PC-3 (cell line): ENCODE measurements at regions of chr17 and their contacts with region 1.

Region 1: GRCh38 chr17:72556944-72557826 is 436.4 kb downstream of the SOX9 start:
- DNase-seq: peak; percentile 89
- ATAC-seq: peak; percentile 48
- H3K4me3 ChIP-seq: no peak overlapping the region
- H3K27ac ChIP-seq: no peak overlapping the region
- H3K4me1 ChIP-seq: peaks cover 20% of the 10 kb centered on the region
- H3K27me3 ChIP-seq: no peaks in the 10 kb centered on the region
- CTCF ChIP-seq: peak; percentile 98

Region 2: DNA sequence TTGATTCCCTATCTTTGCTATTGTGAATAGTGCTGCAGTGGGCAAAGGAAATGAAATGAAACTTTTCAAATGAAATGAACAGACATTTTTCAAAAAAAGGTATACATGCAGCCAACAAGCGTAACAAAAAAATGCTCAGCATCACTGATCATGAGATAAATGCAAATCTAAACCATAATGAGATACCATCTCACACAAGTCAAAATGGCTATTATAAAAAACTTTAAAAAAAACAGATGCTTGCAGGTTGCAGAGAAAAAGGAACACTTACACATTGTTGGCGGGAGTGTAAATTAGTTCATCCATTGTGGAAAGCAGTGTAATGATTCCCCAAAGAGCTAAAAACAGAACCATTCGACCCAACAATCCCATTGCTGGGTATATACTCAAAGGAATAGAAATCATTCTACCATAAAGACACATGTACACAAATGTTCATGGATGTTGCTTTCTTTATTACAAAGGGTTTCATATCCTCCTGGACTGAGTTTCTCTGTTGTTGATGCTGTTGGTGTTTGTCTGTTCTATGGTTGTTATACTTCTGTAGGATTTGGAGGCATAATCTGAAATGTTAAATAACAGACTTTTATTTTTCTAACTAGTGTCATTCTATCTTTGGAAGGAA is 535.7 kb before region 1 on chr17:
- CTCF ChIA-PET with region 1: no interaction called
- POLR2A ChIA-PET with region 1: no interaction called
- intact Hi-C with region 1: no loop called
- DNase-seq: no peak
- ATAC-seq: no peak
- H3K4me3 ChIP-seq: no peak overlapping the region
- H3K27ac ChIP-seq: no peak overlapping the region
- H3K4me1 ChIP-seq: no peaks in the 10 kb centered on the region
- H3K27me3 ChIP-seq: no peaks in the 10 kb centered on the region
- CTCF ChIP-seq: no peak

Region 3: GRCh38 chr17:72569148-72569946 is 12.2 kb after region 1 on chr17:
- CTCF ChIA-PET with region 1: no interaction called
- POLR2A ChIA-PET with region 1: no interaction called
- intact Hi-C with region 1: no loop called
- DNase-seq: no peak
- ATAC-seq: no peak
- H3K4me3 ChIP-seq: no peak overlapping the region
- H3K27ac ChIP-seq: no peak overlapping the region
- H3K4me1 ChIP-seq: no peaks in the 10 kb centered on the region
- H3K27me3 ChIP-seq: no peaks in the 10 kb centered on the region
- CTCF ChIP-seq: no peak

Region 4: GRCh38 chr17:72580321-72581127 is 23.3 kb after region 1 on chr17:
- CTCF ChIA-PET with region 1: interaction called, 11 read pairs
- POLR2A ChIA-PET with region 1: no interaction called
- intact Hi-C with region 1: no loop called
- DNase-seq: peak; percentile 94
- ATAC-seq: peak; percentile 94
- H3K4me3 ChIP-seq: no peak overlapping the region
- H3K27ac ChIP-seq: peak overlapping the region; percentile 45
- H3K4me1 ChIP-seq: peaks cover 22% of the 10 kb centered on the region
- H3K27me3 ChIP-seq: no peaks in the 10 kb centered on the region
- CTCF ChIP-seq: no peak

Region 5: GRCh38 chr17:72618001-72618509 is 60.9 kb after region 1 on chr17:
- CTCF ChIA-PET with region 1: interaction called, 4 read pairs
- POLR2A ChIA-PET with region 1: no interaction called
- intact Hi-C with region 1: loop called (anchors 2 kb)
- DNase-seq: peak; percentile 76
- ATAC-seq: peak; percentile 19
- H3K4me3 ChIP-seq: peak overlapping the region; percentile 27; the same call in 1 of the 2 replicates
- H3K27ac ChIP-seq: peak overlapping the region; percentile 51
- H3K4me1 ChIP-seq: peaks cover 44% of the 10 kb centered on the region
- H3K27me3 ChIP-seq: no peaks in the 10 kb centered on the region
- CTCF ChIP-seq: no peak

Region 6: GRCh38 chr17:72683506-72684404 is 126.6 kb after region 1 on chr17:
- CTCF ChIA-PET with region 1: interaction called, 10 read pairs
- POLR2A ChIA-PET with region 1: no interaction called
- intact Hi-C with region 1: no loop called
- DNase-seq: peak; percentile 100
- ATAC-seq: peak; percentile 95
- H3K4me3 ChIP-seq: peak overlapping the region; percentile 38; the same call in 1 of the 2 replicates
- H3K27ac ChIP-seq: peak overlapping the region; percentile 97
- H3K4me1 ChIP-seq: peaks cover 44% of the 10 kb centered on the region
- H3K27me3 ChIP-seq: no peaks in the 10 kb centered on the region
- CTCF ChIP-seq: no peak

Region 7: GRCh38 chr17:72976971-72977770 is 420.0 kb after region 1 on chr17:
- CTCF ChIA-PET with region 1: interaction called, 6 read pairs
- POLR2A ChIA-PET with region 1: no interaction called
- intact Hi-C with region 1: loop called (anchors 5 kb)
- DNase-seq: peak; percentile 82
- ATAC-seq: 0 out of 2 replicates have a peak, but pooled peaks have one; percentile 2
- H3K4me3 ChIP-seq: peak overlapping the region; percentile 1; the same call in 1 of the 2 replicates
- H3K27ac ChIP-seq: peak overlapping the region; percentile 90
- H3K4me1 ChIP-seq: peaks cover 56% of the 10 kb centered on the region
- H3K27me3 ChIP-seq: no peaks in the 10 kb centered on the region
- CTCF ChIP-seq: no peak

Region 8: GRCh38 chr17:73192894-73193701 is 635.9 kb after region 1 on chr17 and contains the start of gene COG1:
- CTCF ChIA-PET with region 1: interaction called, 19 read pairs
- POLR2A ChIA-PET with region 1: no interaction called
- intact Hi-C with region 1: loop called (anchors 1 kb)
- DNase-seq: peak; percentile 94
- ATAC-seq: peak; percentile 67
- H3K4me3 ChIP-seq: peak within 1 kb of the TSS; percentile 82
- H3K27ac ChIP-seq: peak within 1 kb of the TSS; percentile 83
- H3K4me1 ChIP-seq: peaks cover 17% of the 10 kb centered on the region
- H3K27me3 ChIP-seq: no peaks in the 10 kb centered on the region
- CTCF ChIP-seq: no peak
- total RNA-seq, gene COG1: 24.1 and 31.6 TPM in 2 replicates